ENCODE measurements at regions of chr18 and their contacts with region 1.

Region 1: DNA sequence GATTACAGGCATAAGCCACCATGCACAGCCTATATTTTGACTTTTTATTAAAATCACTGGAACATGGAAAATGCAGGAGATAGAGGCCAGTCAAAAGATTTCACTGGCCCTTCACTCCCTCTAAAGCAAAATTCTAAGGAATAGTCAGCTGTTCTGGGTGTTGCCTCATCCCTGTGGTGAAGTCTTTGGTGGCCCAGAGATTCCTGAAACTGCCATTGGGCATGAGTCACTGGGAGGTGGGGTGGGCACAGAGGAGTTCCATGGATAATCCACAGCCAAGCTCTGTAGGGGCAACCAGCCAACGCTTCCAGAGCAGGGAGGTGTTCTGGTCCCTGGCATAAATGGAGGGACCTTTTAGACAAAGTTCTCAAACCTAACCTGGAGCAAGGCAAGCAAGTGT is 89.7 kb upstream of the TTC39C start:
- DNase-seq: no peak
- H3K4me3 ChIP-seq: no peak overlapping the region
- H3K4me3 Mint-ChIP-seq: no peak overlapping the region
- H3K27ac ChIP-seq: no peak overlapping the region
- H3K27ac Mint-ChIP-seq: peak overlapping the region in 1 of 7 donors; percentile 63
- H3K4me1 ChIP-seq: no peaks in the 10 kb centered on the region
- H3K4me1 Mint-ChIP-seq: no peaks in the 10 kb centered on the region
- H3K27me3 ChIP-seq: no peaks in the 10 kb centered on the region
- H3K27me3 Mint-ChIP-seq: peaks cover 0 to 3% (median 1%) of the 10 kb centered on the region in 3 donors
- CTCF ChIP-seq: no peak

Region 2: GRCh38 chr18:23805898-23806297 is 118.9 kb before region 1 on chr18:
- intact Hi-C with region 1: loop called in 1 of 2 experiments (anchors 10 kb)
- DNase-seq: no peak
- H3K4me3 ChIP-seq: no peak overlapping the region
- H3K4me3 Mint-ChIP-seq: no peak overlapping the region
- H3K27ac ChIP-seq: no peak overlapping the region
- H3K27ac Mint-ChIP-seq: no peak overlapping the region
- H3K4me1 ChIP-seq: no peaks in the 10 kb centered on the region
- H3K4me1 Mint-ChIP-seq: no peaks in the 10 kb centered on the region
- H3K27me3 ChIP-seq: no peaks in the 10 kb centered on the region
- H3K27me3 Mint-ChIP-seq: peaks cover 0 to 1% (median 0%) of the 10 kb centered on the region in 3 donors
- CTCF ChIP-seq: no peak

Measured in CD14-positive monocyte (primary cell).